ENCODE measurements at regions of chr7 and their contacts with region 1.

Region 1: DNA sequence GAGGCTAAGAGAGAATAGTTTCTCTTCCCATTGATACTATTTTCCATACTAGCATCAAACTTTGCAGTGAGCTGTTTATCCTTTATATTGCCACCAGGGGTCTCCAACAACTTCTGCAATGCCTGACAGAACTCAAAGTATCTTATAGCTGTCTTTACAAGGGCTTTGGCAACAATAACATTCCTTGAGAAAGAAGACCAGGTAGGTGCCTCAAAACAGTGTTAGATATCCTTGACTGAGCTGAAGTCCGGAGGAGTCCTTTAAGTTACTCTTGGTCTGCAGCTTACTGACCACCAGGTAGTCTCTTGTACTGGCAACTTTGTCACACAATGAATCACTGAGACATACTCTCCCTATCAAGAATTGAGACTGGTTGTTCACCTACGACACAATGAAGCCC is 30.0 kb upstream of the TES start:
- DNase-seq: peak in 3 of 5 donors; percentile 9 to 58 (median 47)
- H3K4me3 ChIP-seq: no peak overlapping the region
- H3K4me3 Mint-ChIP-seq: no peak overlapping the region
- H3K27ac ChIP-seq: no peak overlapping the region
- H3K27ac Mint-ChIP-seq: no peak overlapping the region
- H3K4me1 ChIP-seq: no peaks in the 10 kb centered on the region
- H3K4me1 Mint-ChIP-seq: peaks cover 6 to 10% (median 9%) of the 10 kb centered on the region in 3 donors
- H3K27me3 ChIP-seq: no peaks in the 10 kb centered on the region
- H3K27me3 Mint-ChIP-seq: peaks cover 3 to 4% of the 10 kb centered on the region in 2 donors

Region 2: DNA sequence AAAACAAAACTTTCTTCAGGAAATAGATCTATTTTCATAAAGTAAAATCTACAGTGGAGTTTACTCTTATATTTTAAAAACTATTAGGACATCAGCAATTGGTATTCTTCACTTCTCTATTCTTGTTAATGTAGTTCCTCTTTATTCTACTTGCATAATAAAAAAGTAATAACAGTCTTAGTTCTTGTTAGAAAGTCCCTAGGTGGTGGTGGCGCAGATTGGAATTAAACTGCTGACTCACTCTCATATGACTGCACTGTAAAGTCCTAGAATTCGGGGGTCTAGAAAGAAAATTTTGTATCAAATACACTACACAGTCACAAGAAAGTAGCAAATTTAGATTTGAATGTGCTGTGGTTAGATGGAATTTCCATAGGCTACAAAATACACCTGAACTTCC is 14.6 kb before region 1 on chr7:
- CTCF ChIA-PET with region 1: interaction called, 14 read pairs
- POLR2A ChIA-PET with region 1: no interaction called
- DNase-seq: no peak
- H3K4me3 ChIP-seq: no peak overlapping the region
- H3K4me3 Mint-ChIP-seq: no peak overlapping the region
- H3K27ac ChIP-seq: no peak overlapping the region
- H3K27ac Mint-ChIP-seq: no peak overlapping the region
- H3K4me1 ChIP-seq: peaks cover 6% of the 10 kb centered on the region
- H3K4me1 Mint-ChIP-seq: peaks cover 3 to 14% (median 8%) of the 10 kb centered on the region in 3 donors
- H3K27me3 ChIP-seq: no peaks in the 10 kb centered on the region
- H3K27me3 Mint-ChIP-seq: peaks cover 2 to 21% of the 10 kb centered on the region in 2 donors

Region 3: DNA sequence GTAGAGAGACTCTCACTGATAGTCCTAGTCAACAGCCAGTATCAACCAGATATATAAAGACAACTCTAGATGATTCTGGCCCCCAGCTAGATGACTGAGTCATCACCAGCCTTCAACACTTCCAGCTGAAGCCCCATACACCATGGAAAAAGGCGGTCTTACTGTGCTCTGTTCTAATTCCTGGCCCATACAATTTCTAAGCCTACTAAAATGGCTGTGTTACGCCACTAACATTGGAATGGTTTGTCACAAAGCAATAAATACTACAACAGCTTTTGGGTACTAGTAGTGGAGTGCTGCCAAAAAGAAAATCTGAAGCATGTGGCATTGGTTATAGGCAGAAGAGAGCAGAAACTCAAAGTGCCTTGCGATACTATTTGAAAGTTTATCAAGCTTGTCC is 17.1 kb after region 1 on chr7:
- CTCF ChIA-PET with region 1: interaction called, 10 read pairs
- POLR2A ChIA-PET with region 1: no interaction called
- DNase-seq: no peak
- H3K4me3 ChIP-seq: no peak overlapping the region
- H3K4me3 Mint-ChIP-seq: no peak overlapping the region
- H3K27ac ChIP-seq: no peak overlapping the region
- H3K27ac Mint-ChIP-seq: no peak overlapping the region
- H3K4me1 ChIP-seq: no peaks in the 10 kb centered on the region
- H3K4me1 Mint-ChIP-seq: no peaks in the 10 kb centered on the region
- H3K27me3 ChIP-seq: no peaks in the 10 kb centered on the region
- H3K27me3 Mint-ChIP-seq: peaks cover 0 to 4% of the 10 kb centered on the region in 2 donors

Measured in CD8-positive, alpha-beta memory T cell (primary cell).